ENCODE measurements at regions of chr20 and their contacts with region 1.

Region 1: DNA sequence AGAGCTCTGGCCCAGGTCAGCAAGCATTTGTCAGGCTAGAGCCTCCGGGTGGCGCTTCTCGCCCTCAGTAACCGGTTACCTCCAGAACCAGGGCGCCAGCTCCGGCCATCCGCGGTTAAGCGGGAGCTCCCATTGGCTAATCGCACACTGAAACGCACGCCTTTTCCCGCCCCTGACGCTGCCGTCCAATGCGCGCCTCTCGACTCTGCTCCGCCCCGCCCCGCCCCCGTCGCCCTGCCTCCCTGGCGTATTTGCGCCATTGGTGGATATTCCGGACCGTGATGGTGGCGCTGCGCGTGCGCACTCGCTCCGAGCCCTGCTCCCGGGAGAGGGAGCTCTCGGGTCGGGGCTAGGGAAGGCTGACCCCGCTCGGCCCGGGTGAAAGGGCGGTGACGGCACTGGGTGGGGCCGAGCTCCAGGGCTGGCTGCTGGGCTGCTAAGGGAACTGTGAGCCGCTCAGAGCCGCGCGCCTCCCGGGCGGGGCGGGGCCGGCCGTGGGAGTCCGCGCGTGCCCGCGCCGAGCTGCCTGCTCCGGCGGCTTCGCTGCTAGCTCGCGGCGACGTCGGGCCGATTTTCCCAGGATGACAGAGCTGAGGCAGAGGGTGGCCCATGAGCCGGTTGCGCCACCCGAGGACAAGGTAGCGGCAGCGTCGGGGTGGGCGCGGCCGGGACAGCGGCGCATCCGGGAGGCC is at the start of gene CDS2:
- DNase-seq: peak; percentile 100
- H3K4me3 Mint-ChIP-seq: peak within 1 kb of the TSS; percentile 90
- H3K27ac Mint-ChIP-seq: peak within 1 kb of the TSS; percentile 94
- H3K4me1 Mint-ChIP-seq: peaks cover 50% of the 10 kb centered on the region
- H3K27me3 Mint-ChIP-seq: no peaks in the 10 kb centered on the region
- total RNA-seq, gene CDS2: 23.2 to 24.1 TPM

Region 2: GRCh38 chr20:5001174-5002076 is 125.2 kb before region 1 on chr20 and contains the start of gene SLC23A2:
- CTCF ChIA-PET with region 1: no interaction called
- intact Hi-C with region 1: no loop called
- DNase-seq: peak; percentile 60
- H3K4me3 Mint-ChIP-seq: peak within 1 kb of the TSS; percentile 87
- H3K27ac Mint-ChIP-seq: peak within 1 kb of the TSS; percentile 79
- H3K4me1 Mint-ChIP-seq: peaks cover 30% of the 10 kb centered on the region
- H3K27me3 Mint-ChIP-seq: no peaks in the 10 kb centered on the region
- total RNA-seq, gene SLC23A2: 16.4 to 18.1 TPM

Region 3: DNA sequence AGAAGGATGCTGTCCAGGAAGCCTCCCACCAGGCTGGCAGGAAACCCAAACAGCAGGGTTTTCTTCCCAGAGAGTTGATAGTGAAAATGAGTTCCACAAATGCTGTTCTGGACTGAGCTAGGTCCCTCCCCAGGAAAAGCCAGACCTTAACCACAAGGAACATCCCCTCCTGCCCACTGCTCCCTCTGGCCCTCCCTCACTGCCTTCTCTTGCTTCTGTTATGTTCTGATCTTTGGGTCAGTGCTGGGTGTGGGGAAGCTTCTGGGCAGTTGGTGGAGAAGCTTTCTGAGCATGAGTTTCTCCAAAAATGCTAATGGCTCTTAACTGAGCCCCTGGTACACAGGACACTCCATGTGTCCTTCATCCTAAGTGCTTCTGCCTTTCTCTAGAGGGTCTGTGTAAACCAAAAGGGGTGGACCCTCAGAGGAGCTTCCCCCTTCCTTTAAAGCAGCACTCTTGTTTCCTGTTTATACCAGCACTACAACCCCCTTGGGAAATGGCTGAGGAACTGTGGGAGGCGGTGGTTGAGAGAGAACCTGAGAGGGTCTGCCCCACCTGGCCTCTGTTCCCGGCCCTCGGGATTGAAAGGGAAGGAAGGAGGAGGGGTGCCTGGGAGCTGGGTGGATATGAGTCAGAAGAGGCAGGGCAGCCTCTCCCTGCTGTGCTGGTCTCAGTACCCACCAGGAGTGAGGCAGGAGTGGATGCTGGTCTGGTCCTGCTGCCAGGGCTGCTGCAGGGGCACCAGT is 42.2 kb after region 1 on chr20:
- CTCF ChIA-PET with region 1: interaction called, 10 read pairs
- intact Hi-C with region 1: no loop called
- DNase-seq: peak; percentile 16
- H3K4me3 Mint-ChIP-seq: no peak overlapping the region
- H3K27ac Mint-ChIP-seq: peak overlapping the region; percentile 47
- H3K4me1 Mint-ChIP-seq: peaks cover 66% of the 10 kb centered on the region
- H3K27me3 Mint-ChIP-seq: no peaks in the 10 kb centered on the region

Region 4: DNA sequence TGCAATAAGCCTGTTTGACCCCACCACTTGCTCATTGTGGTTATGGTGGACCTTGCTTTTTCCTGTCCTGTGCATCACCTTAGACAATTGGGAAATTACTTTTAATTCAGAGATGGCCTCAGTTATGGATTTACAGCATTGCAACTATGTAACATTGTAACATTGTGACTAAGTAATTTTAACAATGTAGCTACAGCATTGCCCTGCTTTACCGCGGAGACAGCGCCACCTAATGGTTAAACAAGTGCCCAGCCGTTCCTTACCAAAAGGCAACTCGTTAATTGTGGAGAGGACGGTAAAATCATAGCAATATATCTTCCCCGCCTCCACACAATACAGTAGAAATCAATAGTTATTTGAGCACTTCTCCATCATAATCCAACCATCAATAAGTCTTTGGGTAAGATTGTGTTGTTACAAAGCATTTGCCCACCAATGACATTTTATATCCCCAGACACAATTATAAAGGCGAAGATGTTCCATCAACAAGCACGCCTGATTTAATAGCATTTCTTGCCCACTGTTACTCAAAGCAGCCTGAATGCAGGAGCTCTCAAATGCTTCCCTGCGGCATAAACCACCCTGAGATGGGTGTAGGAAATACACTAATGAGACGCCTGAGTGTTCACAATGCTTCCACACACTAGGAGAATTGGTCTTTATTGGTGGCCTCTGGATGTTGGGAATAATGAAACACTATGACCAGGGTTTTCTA is 96.4 kb after region 1 on chr20:
- CTCF ChIA-PET with region 1: interaction called, 35 read pairs
- intact Hi-C with region 1: loop called (anchors 1 kb)
- DNase-seq: peak; percentile 83
- H3K4me3 Mint-ChIP-seq: no peak overlapping the region
- H3K27ac Mint-ChIP-seq: no peak overlapping the region
- H3K4me1 Mint-ChIP-seq: no peaks in the 10 kb centered on the region
- H3K27me3 Mint-ChIP-seq: peaks cover 2% of the 10 kb centered on the region

Region 5: GRCh38 chr20:5448449-5449118 is 321.9 kb after region 1 on chr20:
- CTCF ChIA-PET with region 1: no interaction called
- intact Hi-C with region 1: loop called (anchors 1 kb)
- DNase-seq: peak; percentile 78
- H3K4me3 Mint-ChIP-seq: no peak overlapping the region
- H3K27ac Mint-ChIP-seq: no peak overlapping the region
- H3K4me1 Mint-ChIP-seq: no peaks in the 10 kb centered on the region
- H3K27me3 Mint-ChIP-seq: peaks cover 25% of the 10 kb centered on the region

Region 6: GRCh38 chr20:5714261-5715041 is 587.8 kb after region 1 on chr20:
- CTCF ChIA-PET with region 1: no interaction called
- intact Hi-C with region 1: loop called (anchors 1 kb)
- DNase-seq: peak; percentile 75
- H3K4me3 Mint-ChIP-seq: no peak overlapping the region
- H3K27ac Mint-ChIP-seq: peak overlapping the region; percentile 72
- H3K4me1 Mint-ChIP-seq: peaks cover 28% of the 10 kb centered on the region
- H3K27me3 Mint-ChIP-seq: no peaks in the 10 kb centered on the region

Region 7: DNA sequence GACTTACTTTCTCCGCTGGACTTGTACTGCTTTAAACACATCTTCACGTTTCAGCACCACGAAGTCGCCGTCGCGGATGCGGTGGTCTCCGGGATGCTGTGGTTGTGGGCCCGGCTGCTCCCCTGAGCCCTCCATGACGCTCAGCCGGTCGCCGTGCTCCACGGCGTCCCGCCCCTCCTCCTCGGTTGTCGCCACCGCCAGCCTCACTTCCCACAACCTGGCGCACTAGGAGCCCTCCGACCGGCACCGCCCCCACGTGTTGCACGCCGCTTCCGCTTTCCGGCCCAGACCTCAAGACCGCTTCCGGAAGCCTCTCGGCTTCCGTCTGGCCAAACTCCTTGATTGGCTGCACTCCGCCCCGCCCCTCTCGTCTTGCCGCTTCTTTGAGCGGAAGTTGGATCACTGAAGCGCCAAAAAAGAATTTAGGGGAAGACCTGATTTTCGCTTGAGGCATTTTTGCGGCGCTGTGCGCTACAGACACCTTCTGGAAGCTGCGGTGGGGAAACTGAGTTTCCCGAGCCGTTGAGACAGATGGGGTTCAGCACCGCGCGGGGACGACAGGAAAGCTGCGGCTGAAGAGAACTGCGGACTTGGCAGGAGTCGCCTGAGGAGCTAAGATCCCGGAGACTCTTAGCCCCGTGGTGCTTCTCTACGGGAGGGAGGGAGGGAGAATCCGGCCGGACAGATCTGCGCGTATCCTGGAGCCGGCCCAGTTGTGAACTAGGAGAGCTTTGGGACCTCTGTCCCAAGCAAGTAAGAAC is 823.8 kb after region 1 on chr20 and contains the starts of genes MCM8 and TRMT6:
- CTCF ChIA-PET with region 1: no interaction called
- intact Hi-C with region 1: loop called (anchors 1 kb)
- DNase-seq: peak; percentile 98
- H3K4me3 Mint-ChIP-seq: peak within 1 kb of the TSS; percentile 97
- H3K27ac Mint-ChIP-seq: peak within 1 kb of the TSS; percentile 95
- H3K4me1 Mint-ChIP-seq: peaks cover 61% of the 10 kb centered on the region
- H3K27me3 Mint-ChIP-seq: no peaks in the 10 kb centered on the region
- total RNA-seq, gene MCM8: 49.6 to 50.3 TPM
- total RNA-seq, gene TRMT6: 11.5 to 11.8 TPM